GM12878 (cell line): ENCODE measurements at regions of chr6 and their contacts with region 1.

Region 1: GRCh38 chr6:87174078-87174579 is 18.8 kb downstream of the ZNF292 start:
- DNase-seq: no peak
- ATAC-seq: peak; percentile 66
- H3K4me3 ChIP-seq: peak overlapping the region; percentile 27; the same call in 1 of the 2 replicates
- H3K27ac ChIP-seq: peak overlapping the region; percentile 38; the same call in 1 of the 2 replicates
- H3K4me1 ChIP-seq: peaks cover 23% of the 10 kb centered on the region
- H3K27me3 ChIP-seq: no peaks in the 10 kb centered on the region
- CTCF ChIP-seq: no peak
- EP300 ChIP-seq: no peak
- POLR2A ChIP-seq: no peak
- RAD21 ChIP-seq: no peak

Region 2: DNA sequence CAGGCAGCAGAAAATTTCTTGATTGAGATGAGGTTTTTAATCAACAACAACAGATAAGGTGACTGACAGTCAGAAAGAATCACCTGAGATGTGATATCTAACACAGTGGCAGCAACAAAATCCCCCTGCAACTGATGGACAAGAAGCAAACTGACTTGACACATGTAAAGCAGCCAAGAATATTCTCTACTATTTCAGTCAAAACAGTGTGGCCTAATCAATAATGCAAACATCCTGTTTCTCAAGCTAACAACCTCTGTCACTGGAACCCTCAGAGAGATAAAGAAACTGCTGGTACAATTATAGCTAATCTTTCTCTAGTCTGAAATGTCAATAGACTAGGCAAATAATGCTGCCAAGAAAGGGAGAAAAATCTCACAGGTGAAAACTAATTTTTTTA is 74.7 kb before region 1 on chr6:
- CTCF ChIA-PET with region 1: no interaction called
- POLR2A ChIA-PET with region 1: no interaction called
- RAD21 ChIA-PET with region 1: no interaction called
- SMC1A ChIA-PET with region 1: no interaction called
- in situ Hi-C with region 1: no loop called
- intact Hi-C with region 1: no loop called
- DNase-seq: peak; percentile 33
- ATAC-seq: peak; percentile 72
- H3K4me3 ChIP-seq: no peak overlapping the region
- H3K27ac ChIP-seq: no peak overlapping the region
- H3K4me1 ChIP-seq: no peaks in the 10 kb centered on the region
- H3K27me3 ChIP-seq: no peaks in the 10 kb centered on the region
- CTCF ChIP-seq: no peak
- EP300 ChIP-seq: no peak
- POLR2A ChIP-seq: no peak
- RAD21 ChIP-seq: no peak

Region 3: GRCh38 chr6:87164004-87164403 is 10.1 kb before region 1 on chr6:
- CTCF ChIA-PET with region 1: interaction called, 8 read pairs
- POLR2A ChIA-PET with region 1: interaction called, 9 read pairs
- RAD21 ChIA-PET with region 1: interaction called, 6 read pairs
- SMC1A ChIA-PET with region 1: interaction called, 37 read pairs
- in situ Hi-C with region 1: no loop called
- intact Hi-C with region 1: no loop called
- DNase-seq: no peak
- ATAC-seq: peak; percentile 56
- H3K4me3 ChIP-seq: no peak overlapping the region
- H3K27ac ChIP-seq: no peak overlapping the region
- H3K4me1 ChIP-seq: peaks cover 8% of the 10 kb centered on the region
- H3K27me3 ChIP-seq: no peaks in the 10 kb centered on the region
- CTCF ChIP-seq: no peak
- EP300 ChIP-seq: no peak
- POLR2A ChIP-seq: no peak
- RAD21 ChIP-seq: no peak

Region 4: GRCh38 chr6:87257565-87257964 is 83.4 kb after region 1 on chr6:
- CTCF ChIA-PET with region 1: no interaction called
- POLR2A ChIA-PET with region 1: no interaction called
- RAD21 ChIA-PET with region 1: no interaction called
- SMC1A ChIA-PET with region 1: no interaction called
- in situ Hi-C with region 1: no loop called
- intact Hi-C with region 1: no loop called
- DNase-seq: no peak
- ATAC-seq: no peak
- H3K4me3 ChIP-seq: no peak overlapping the region
- H3K27ac ChIP-seq: no peak overlapping the region
- H3K4me1 ChIP-seq: no peaks in the 10 kb centered on the region; the same call in 1 of the 2 replicates
- H3K27me3 ChIP-seq: no peaks in the 10 kb centered on the region
- CTCF ChIP-seq: no peak
- EP300 ChIP-seq: no peak
- POLR2A ChIP-seq: no peak
- RAD21 ChIP-seq: no peak

Region 5: GRCh38 chr6:87407901-87408720 is 234.0 kb after region 1 on chr6 and contains the start of gene CFAP206:
- CTCF ChIA-PET with region 1: no interaction called
- POLR2A ChIA-PET with region 1: no interaction called
- RAD21 ChIA-PET with region 1: no interaction called
- SMC1A ChIA-PET with region 1: no interaction called
- in situ Hi-C with region 1: no loop called
- intact Hi-C with region 1: no loop called
- DNase-seq: peak; percentile 40
- ATAC-seq: peak; percentile 93
- H3K4me3 ChIP-seq: peak within 1 kb of the TSS; percentile 79
- H3K27ac ChIP-seq: no peak within 1 kb of the TSS
- H3K4me1 ChIP-seq: no peaks in the 10 kb centered on the region
- H3K27me3 ChIP-seq: no peaks in the 10 kb centered on the region; a peak in 1 of 4 replicates
- CTCF ChIP-seq: peak in 2 of 3 experiments; percentile 6 to 24; a peak in 1 of 6 replicates
- EP300 ChIP-seq: no peak
- POLR2A ChIP-seq: no peak
- RAD21 ChIP-seq: no peak
- polyA plus RNA-seq, gene CFAP206: not detected

Region 6: GRCh38 chr6:87444362-87444761 is 270.2 kb after region 1 on chr6:
- CTCF ChIA-PET with region 1: no interaction called
- POLR2A ChIA-PET with region 1: no interaction called
- RAD21 ChIA-PET with region 1: no interaction called
- SMC1A ChIA-PET with region 1: no interaction called
- in situ Hi-C with region 1: no loop called
- intact Hi-C with region 1: no loop called
- DNase-seq: no peak
- ATAC-seq: no peak
- H3K4me3 ChIP-seq: no peak overlapping the region
- H3K27ac ChIP-seq: no peak overlapping the region
- H3K4me1 ChIP-seq: no peaks in the 10 kb centered on the region
- H3K27me3 ChIP-seq: no peaks in the 10 kb centered on the region
- CTCF ChIP-seq: no peak
- EP300 ChIP-seq: no peak
- POLR2A ChIP-seq: no peak
- RAD21 ChIP-seq: no peak